IMR-90 (cell line): ENCODE measurements at regions of chr6 and their contacts with region 1.

Region 1: DNA sequence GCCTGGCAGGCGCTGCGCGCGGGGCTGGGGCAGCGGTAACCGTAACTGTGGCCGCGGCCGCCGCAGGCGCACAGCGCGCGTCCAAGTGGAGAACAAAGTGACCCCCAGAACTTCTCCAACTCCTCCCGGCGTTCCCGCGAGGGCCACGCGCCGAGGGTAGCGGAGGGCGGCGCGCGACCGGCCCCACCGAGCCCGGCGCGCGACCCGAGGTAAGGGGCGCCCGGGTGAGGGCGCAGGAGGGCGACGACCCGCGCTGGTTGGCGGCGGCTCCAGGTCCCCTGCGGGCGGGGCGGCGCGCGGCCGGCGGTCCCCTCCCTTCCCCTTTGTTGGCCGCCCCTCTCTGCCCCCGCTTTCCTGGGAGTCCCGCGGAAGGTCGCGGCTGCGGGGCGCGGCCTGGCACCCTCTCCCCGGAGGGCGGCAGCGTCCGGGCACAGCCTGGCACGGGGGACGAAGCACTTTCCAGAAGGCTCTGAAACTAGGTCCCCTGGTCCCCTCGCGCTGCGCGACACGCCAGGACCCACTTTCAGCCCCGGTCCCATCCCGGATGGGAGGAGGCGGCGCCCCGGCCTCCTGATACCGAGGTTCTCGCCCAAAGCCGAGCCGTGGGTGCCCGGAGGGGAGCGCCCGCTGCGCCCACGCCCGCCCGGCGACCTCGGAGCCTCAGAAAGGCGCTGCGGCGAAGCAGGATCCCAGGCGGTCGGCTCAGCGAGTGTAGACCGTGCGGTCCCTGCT is at the start of gene TIAM2:
- DNase-seq: no peak
- ATAC-seq: peak; percentile 87
- H3K4me3 ChIP-seq: peak within 1 kb of the TSS; percentile 91
- H3K27ac ChIP-seq: peak within 1 kb of the TSS; percentile 35; the same call in 1 of the 2 replicates
- H3K4me1 ChIP-seq: no peaks in the 10 kb centered on the region; the same call in 1 of the 2 replicates
- H3K27me3 ChIP-seq: no peaks in the 10 kb centered on the region
- CTCF ChIP-seq: 0 out of 2 replicates have a peak, but pooled peaks have one; percentile 4
- POLR2A ChIP-seq: no peak
- RAD21 ChIP-seq: no peak
- total RNA-seq, gene TIAM2: 4.7 and 5.6 TPM in 2 replicates

Region 2: GRCh38 chr6:154969796-154970195 is 25.7 kb before region 1 on chr6:
- CTCF ChIA-PET with region 1: no interaction called
- POLR2A ChIA-PET with region 1: interaction called, 17 read pairs
- dilution Hi-C with region 1: no loop called
- in situ Hi-C with region 1: no loop called
- intact Hi-C with region 1: no loop called
- DNase-seq: no peak
- ATAC-seq: peak; percentile 24; the same call in 1 of the 2 replicates
- H3K4me3 ChIP-seq: no peak overlapping the region
- H3K27ac ChIP-seq: no peak overlapping the region
- H3K4me1 ChIP-seq: no peaks in the 10 kb centered on the region
- H3K27me3 ChIP-seq: no peaks in the 10 kb centered on the region
- CTCF ChIP-seq: no peak
- POLR2A ChIP-seq: no peak
- RAD21 ChIP-seq: no peak

Region 3: DNA sequence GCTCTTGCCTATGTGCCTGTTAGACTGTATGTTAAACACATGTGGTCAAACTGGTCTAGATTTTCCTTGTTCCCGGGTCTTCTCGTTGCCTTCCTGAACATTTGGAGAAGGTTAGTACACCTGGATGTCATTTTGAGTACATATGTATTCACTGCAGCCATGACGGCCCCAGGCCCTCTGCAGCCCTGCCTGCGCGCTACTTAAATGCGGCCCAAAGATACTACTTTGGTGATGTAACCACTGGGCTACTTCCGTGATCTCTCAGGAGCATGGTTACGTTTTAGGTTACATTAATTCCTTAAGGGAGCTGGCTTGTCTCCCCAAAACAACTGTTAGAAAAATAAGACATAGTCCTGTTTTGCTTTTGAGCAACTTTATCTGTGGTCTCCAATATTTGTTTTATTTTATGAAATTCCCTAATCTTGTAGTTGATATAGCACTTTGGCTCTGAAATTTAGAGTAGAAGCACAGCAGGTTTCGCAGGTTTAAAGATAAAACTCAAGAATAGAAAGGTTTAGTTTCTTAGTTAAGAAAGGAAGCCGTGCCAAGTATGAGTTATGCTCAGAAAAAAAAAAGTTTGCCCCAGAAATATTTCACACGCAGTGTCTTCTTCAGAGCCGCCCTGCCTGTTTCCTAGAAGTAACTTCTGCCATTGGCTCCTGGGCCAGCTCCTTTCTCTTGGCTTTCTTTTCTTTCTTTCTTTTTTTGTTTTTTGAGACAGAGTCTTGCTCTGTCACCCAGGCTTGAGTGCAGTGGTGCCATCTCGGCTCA is 37.8 kb after region 1 on chr6:
- CTCF ChIA-PET with region 1: no interaction called
- POLR2A ChIA-PET with region 1: no interaction called
- dilution Hi-C with region 1: no loop called
- in situ Hi-C with region 1: no loop called
- intact Hi-C with region 1: no loop called
- DNase-seq: no peak
- ATAC-seq: no peak
- H3K4me3 ChIP-seq: no peak overlapping the region
- H3K27ac ChIP-seq: no peak overlapping the region
- H3K4me1 ChIP-seq: peaks cover 3% of the 10 kb centered on the region; the same call in 1 of the 2 replicates
- H3K27me3 ChIP-seq: no peaks in the 10 kb centered on the region
- CTCF ChIP-seq: no peak
- POLR2A ChIP-seq: no peak
- RAD21 ChIP-seq: no peak